CD14-positive monocyte (primary cell): ENCODE measurements at regions of chr16 and their contacts with region 1.

Region 1: GRCh38 chr16:85735225-85735635 is 15.7 kb downstream of the C16orf74 start:
- DNase-seq: peak; percentile 36 to 43 (median 38)
- H3K4me3 ChIP-seq: peak overlapping the region; percentile 7 to 72 (median 17)
- H3K4me3 Mint-ChIP-seq: peak overlapping the region; percentile 64 to 75
- H3K27ac ChIP-seq: peak overlapping the region; percentile 79 to 83
- H3K27ac Mint-ChIP-seq: peak overlapping the region in 3 of 7 donors; percentile 42 to 76 (median 73)
- H3K4me1 ChIP-seq: peaks cover 70 to 72% of the 10 kb centered on the region in 2 donors
- H3K4me1 Mint-ChIP-seq: peaks cover 68% of the 10 kb centered on the region
- H3K27me3 ChIP-seq: no peaks in the 10 kb centered on the region
- H3K27me3 Mint-ChIP-seq: peaks cover 0 to 6% (median 0%) of the 10 kb centered on the region in 3 donors
- CTCF ChIP-seq: no peak

Region 2: DNA sequence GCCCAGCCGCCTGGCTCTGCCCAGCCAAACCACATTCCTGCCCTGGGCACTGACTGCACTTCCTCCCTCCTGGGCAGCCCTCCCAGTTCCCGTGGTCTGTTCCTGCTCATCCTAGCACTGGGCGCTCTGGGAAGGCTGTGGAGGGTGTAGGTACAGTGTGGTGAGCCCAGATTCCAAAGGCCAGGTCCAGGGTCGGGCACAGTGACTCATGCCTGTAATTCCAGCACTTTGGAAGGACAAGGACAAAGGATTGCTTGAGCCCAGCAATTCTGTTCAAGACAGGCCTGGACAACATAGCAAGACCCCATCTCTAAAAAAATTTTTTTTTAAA is 15.0 kb before region 1 on chr16:
- intact Hi-C with region 1: no loop called
- DNase-seq: no peak
- H3K4me3 ChIP-seq: no peak overlapping the region
- H3K4me3 Mint-ChIP-seq: no peak overlapping the region
- H3K27ac ChIP-seq: no peak overlapping the region
- H3K27ac Mint-ChIP-seq: no peak overlapping the region
- H3K4me1 ChIP-seq: peaks cover 17 to 26% of the 10 kb centered on the region in 2 donors
- H3K4me1 Mint-ChIP-seq: peaks cover 16% of the 10 kb centered on the region
- H3K27me3 ChIP-seq: no peaks in the 10 kb centered on the region
- H3K27me3 Mint-ChIP-seq: peaks cover 2 to 12% (median 10%) of the 10 kb centered on the region in 3 donors
- CTCF ChIP-seq: no peak

Region 3: DNA sequence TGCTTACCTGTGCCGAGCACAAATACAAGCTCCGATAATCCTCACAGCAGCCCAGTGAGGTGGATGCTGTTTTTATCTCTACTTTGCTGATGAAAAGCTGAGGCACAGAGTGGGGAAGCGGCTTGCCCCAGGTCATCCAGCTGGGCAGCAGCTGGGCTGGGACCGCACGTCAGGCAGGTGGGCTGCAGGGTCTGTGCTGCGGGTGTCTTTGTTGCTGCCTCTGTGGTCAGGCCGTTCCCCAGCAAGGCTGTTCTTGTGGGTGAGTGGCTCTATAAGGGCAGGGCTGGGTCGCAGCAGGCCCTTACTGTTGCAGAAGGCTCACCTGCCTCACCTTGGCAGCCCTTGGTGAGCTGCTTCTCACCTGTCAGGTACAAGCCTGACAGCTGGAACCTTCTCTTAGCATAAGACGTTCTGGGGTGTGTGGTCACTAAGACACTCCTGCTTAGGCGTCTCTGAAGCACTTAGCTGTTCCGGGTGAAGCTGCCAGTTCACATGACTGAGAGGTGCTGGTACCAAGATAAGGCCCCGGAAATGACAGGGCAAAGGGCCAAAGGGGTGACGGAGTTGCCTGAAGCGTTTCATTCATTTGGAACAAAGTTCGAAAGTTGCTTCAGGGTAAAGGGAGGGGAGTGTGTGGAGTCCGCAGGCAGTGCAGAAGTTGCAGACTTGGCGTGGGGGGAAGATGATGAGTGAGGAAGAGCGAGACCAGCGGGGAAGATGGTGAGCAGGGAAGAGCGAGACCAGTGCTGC is 181.1 kb after region 1 on chr16:
- intact Hi-C with region 1: loop called in 1 of 2 experiments (anchors 10 kb)
- DNase-seq: peak; percentile 75 to 90 (median 79)
- H3K4me3 ChIP-seq: no peak overlapping the region
- H3K4me3 Mint-ChIP-seq: peak overlapping the region in 1 of 2 donors; percentile 39
- H3K27ac ChIP-seq: peak overlapping the region; percentile 87 to 91
- H3K27ac Mint-ChIP-seq: peak overlapping the region; percentile 85 to 91 (median 89)
- H3K4me1 ChIP-seq: peaks cover 60 to 61% of the 10 kb centered on the region in 2 donors
- H3K4me1 Mint-ChIP-seq: peaks cover 62% of the 10 kb centered on the region
- H3K27me3 ChIP-seq: no peaks in the 10 kb centered on the region
- H3K27me3 Mint-ChIP-seq: peaks cover 0 to 3% (median 0%) of the 10 kb centered on the region in 3 donors
- CTCF ChIP-seq: no peak